Panc1 (cell line): ENCODE measurements at regions of chr12 and their contacts with region 1.

Region 1: GRCh38 chr12:34335819-34336262 is 313.5 kb downstream of the ALG10 start:
- DNase-seq: no peak
- ATAC-seq: peak; percentile 73
- H3K4me3 ChIP-seq: peak overlapping the region; percentile 59 to 72
- H3K27ac ChIP-seq: peak overlapping the region; percentile 84
- H3K4me1 ChIP-seq: peaks cover 42% of the 10 kb centered on the region
- H3K27me3 ChIP-seq: no peaks in the 10 kb centered on the region; the same call in 1 of the 2 replicates
- CTCF ChIP-seq: no peak

Region 2: GRCh38 chr12:34257093-34257492 is 78.7 kb before region 1 on chr12:
- CTCF ChIA-PET with region 1: no interaction called
- POLR2A ChIA-PET with region 1: no interaction called
- in situ Hi-C with region 1: no loop called
- intact Hi-C with region 1: no loop called
- DNase-seq: no peak
- ATAC-seq: no peak
- H3K4me3 ChIP-seq: no peak overlapping the region
- H3K27ac ChIP-seq: no peak overlapping the region
- H3K4me1 ChIP-seq: peaks cover 11% of the 10 kb centered on the region; the same call in 1 of the 2 replicates
- H3K27me3 ChIP-seq: no peaks in the 10 kb centered on the region
- CTCF ChIP-seq: peak; percentile 36; the same call in 1 of the 2 replicates

Region 3: DNA sequence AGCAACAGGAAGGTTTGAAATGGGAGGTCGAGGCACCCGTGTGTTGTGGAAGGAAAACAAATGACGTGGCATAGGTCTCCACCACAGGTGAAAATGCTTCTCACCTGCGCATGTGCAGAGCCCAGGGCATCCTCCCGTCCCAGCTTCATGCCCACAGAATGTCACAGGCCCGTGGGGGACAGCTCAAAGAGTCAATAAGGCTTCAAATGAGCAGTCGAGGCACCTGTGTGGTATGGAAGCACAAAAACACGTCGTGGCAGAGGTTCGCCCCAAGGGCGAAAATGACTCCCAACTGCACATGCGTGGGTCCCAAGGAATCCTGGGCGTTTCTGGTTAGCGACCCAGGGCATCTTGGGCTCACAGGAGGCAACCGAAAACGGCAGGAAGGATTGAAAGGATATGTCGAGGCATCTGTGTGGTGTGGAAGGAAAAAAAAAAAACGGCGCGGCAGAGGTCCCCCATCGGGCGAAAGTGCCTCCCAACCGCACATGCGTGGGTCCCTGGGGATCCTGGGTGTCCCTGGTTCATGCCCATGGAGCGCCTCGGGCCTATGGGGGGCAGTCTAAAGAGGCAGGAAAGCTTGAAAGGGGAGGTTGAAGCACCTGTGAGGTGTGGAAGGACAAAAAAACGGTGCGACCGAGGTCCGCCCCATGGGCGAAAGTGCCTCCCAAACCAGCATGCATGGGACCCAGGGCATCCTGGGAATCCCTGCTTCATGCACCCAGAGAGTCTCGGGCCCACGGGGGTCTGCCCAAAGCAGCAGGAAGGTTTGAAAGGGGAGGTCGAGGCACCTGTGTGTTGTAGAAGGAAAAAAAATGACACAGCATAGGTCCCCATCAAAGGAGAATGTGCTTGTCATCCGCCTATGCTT is 265.0 kb after region 1 on chr12:
- CTCF ChIA-PET with region 1: no interaction called
- POLR2A ChIA-PET with region 1: no interaction called
- in situ Hi-C with region 1: no loop called
- intact Hi-C with region 1: loop called (anchors 5 kb)
- DNase-seq: no peak
- ATAC-seq: no peak
- H3K4me3 ChIP-seq: peak overlapping the region; percentile 24 to 37
- H3K27ac ChIP-seq: no peak overlapping the region
- H3K4me1 ChIP-seq: peaks cover 8% of the 10 kb centered on the region
- H3K27me3 ChIP-seq: peaks cover 9% of the 10 kb centered on the region; the same call in 1 of the 2 replicates
- CTCF ChIP-seq: no peak

Region 4: DNA sequence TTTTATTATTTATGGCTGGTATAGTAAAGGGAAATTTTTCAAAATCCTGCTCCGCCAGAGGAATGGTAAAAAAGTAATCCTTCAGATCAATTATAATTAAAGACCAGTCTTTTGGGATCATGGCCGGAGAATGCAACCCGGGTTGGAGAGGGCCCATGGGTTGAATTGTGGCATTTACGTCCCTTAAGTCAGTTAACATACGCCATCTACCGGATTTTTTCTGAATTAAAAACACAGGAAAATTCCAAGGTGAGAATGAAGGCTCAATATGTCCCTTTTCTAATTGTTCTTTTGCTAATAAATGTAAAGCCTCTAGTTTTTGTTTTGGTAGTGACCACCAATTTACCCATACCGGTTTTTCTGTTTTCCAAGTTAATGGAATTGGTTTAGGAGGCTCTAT is 289.3 kb after region 1 on chr12:
- CTCF ChIA-PET with region 1: no interaction called
- POLR2A ChIA-PET with region 1: no interaction called
- in situ Hi-C with region 1: no loop called
- intact Hi-C with region 1: no loop called
- DNase-seq: peak; percentile 25
- ATAC-seq: peak; percentile 80
- H3K4me3 ChIP-seq: no peak overlapping the region
- H3K27ac ChIP-seq: no peak overlapping the region
- H3K4me1 ChIP-seq: no peaks in the 10 kb centered on the region
- H3K27me3 ChIP-seq: no peaks in the 10 kb centered on the region
- CTCF ChIP-seq: peak; percentile 64; the same call in 1 of the 2 replicates